ENCODE measurements at regions of chr11 and their contacts with region 1.

Region 1: GRCh38 chr11:128548655-128549255 is 38.6 kb downstream of the ETS1 start:
- DNase-seq: peak in 5 of 10 donors; percentile 14 to 49 (median 40)
- ATAC-seq: peak; percentile 26 to 32
- H3K4me3 Mint-ChIP-seq: peak overlapping the region; percentile 81 to 93 (median 88)
- H3K27ac Mint-ChIP-seq: peak overlapping the region; percentile 92 to 100 (median 95)
- H3K4me1 Mint-ChIP-seq: peaks cover 57 to 95% (median 92%) of the 10 kb centered on the region in 4 donors
- H3K27me3 Mint-ChIP-seq: no peaks in the 10 kb centered on the region

Region 2: GRCh38 chr11:128535468-128536457 is 13.0 kb before region 1 on chr11:
- POLR2A ChIA-PET with region 1: interaction called, 12 read pairs
- DNase-seq: no peak
- ATAC-seq: no peak
- H3K4me3 Mint-ChIP-seq: peak overlapping the region in 1 of 10 donors; percentile 5
- H3K27ac Mint-ChIP-seq: peak overlapping the region in 1 of 10 donors; percentile 15
- H3K4me1 Mint-ChIP-seq: peaks cover 19 to 40% (median 23%) of the 10 kb centered on the region in 4 donors
- H3K27me3 Mint-ChIP-seq: no peaks in the 10 kb centered on the region

Region 3: DNA sequence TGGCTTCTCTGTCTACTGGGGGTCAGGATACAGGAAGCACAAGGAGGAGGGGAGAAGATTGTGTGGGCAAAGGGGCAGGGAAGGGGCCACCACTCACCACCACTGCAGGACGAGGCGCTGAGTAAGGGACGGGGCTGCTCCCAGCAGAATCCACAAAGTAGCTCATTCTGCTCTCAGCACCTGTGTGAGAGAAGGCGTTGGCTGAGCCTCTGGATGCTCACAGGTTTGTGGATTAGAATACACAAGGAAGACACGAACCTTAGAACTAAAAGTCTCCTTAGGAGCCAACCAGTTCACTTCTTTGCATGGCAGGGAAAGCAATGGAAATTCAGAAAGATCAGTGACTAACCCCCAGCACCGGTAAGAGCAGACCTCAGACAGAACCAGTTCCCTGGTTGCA is 24.2 kb after region 1 on chr11:
- POLR2A ChIA-PET with region 1: no interaction called
- DNase-seq: no peak
- ATAC-seq: no peak
- H3K4me3 Mint-ChIP-seq: no peak overlapping the region
- H3K27ac Mint-ChIP-seq: peak overlapping the region in 2 of 10 donors; percentile 15 to 34
- H3K4me1 Mint-ChIP-seq: peaks cover 23 to 48% (median 45%) of the 10 kb centered on the region in 4 donors
- H3K27me3 Mint-ChIP-seq: no peaks in the 10 kb centered on the region

Region 4: GRCh38 chr11:128587452-128587851 is 38.7 kb after region 1 on chr11 and contains the start of gene ETS1:
- POLR2A ChIA-PET with region 1: no interaction called
- DNase-seq: no peak
- ATAC-seq: no peak
- H3K4me3 Mint-ChIP-seq: no peak within 1 kb of the TSS
- H3K27ac Mint-ChIP-seq: peak within 1 kb of the TSS in 1 of 10 donors; percentile 32
- H3K4me1 Mint-ChIP-seq: peaks cover 20 to 39% (median 34%) of the 10 kb centered on the region in 4 donors
- H3K27me3 Mint-ChIP-seq: no peaks in the 10 kb centered on the region
- polyA plus RNA-seq, gene ETS1: 407 to 433 (median 430) TPM

Measured in naive thymus-derived CD8-positive, alpha-beta T cell (primary cell).